PC-9 (cell line): ENCODE measurements at regions of chr4 and their contacts with region 1.

Region 1: DNA sequence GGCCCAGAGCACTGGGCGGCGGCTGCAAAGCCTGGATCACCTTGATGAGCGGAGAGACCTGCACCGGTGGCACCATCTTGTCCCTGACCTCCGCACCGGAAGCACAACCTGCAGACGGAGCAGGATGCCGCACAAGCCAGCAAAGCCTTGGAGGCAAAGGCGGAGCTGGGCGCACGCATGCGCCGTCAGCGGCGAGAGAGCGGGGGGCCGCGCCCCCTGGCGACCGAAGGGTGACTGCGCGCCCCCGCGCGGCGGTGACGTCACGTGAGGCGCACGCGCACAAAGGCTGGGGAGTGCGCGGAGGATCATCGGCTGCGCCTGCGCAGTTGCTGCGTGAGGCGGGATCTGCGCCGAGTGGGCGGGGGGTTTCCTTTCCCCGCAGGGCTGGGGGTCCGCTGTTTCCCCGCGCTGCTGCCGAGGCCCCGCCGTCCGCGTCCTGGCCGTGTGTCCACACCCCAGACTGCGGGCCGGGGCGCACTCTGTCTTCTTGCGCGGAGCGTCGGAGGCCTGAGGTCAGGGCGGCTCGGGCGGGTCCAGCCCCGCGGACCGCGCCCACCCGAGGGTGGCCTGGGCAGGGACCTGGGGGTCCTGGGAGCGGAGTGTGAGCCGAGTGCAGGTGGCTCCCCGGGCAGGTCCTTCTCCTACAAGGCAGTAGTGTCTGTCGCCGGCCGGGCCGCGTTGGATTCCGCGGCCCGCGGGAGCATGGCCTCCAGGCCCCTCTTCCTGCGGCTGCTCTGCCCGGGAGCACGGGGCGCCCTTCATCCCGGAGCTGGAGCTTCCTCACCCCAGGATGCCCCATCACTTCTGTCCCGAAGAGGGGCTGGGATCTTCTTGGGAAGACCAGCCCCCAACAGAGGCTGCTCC is at the starts of genes ATP5ME and MYL5:
- DNase-seq: peak; percentile 87 to 97
- H3K4me3 ChIP-seq: peak within 1 kb of the TSS; percentile 79
- H3K27ac ChIP-seq: peak within 1 kb of the TSS; percentile 25; the same call in 1 of the 2 replicates
- H3K4me1 ChIP-seq: peaks cover 14% of the 10 kb centered on the region
- H3K27me3 ChIP-seq: no peaks in the 10 kb centered on the region
- CTCF ChIP-seq: peak; percentile 88
- total RNA-seq, gene ATP5ME: 334 and 417 TPM in 2 replicates
- total RNA-seq, gene MYL5: 29.8 and 47.6 TPM in 2 replicates

Region 2: DNA sequence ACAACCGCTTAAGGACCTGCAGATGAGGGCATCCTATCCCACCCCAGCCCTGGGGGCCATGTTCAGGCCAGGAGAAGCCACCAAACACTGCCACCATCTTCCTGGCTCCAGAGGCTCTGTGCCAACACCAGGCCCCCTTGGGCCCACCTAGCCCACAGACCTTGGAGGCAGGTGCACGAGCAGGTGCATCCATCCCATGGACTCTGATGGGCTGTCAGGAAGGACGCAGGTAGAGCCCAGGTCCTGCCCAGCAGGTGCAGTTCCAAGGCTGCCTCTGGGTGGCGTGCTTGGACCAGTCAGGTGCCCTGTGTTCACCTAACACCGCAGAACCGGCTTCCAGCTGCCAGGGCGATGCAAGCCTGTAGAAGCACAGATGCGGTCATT is 71.9 kb before region 1 on chr4:
- CTCF ChIA-PET with region 1: interaction called, 12 read pairs
- POLR2A ChIA-PET with region 1: interaction called, 5 read pairs
- intact Hi-C with region 1: loop called (anchors 1 kb)
- DNase-seq: peak; percentile 74 to 87
- H3K4me3 ChIP-seq: no peak overlapping the region
- H3K27ac ChIP-seq: no peak overlapping the region
- H3K4me1 ChIP-seq: no peaks in the 10 kb centered on the region
- H3K27me3 ChIP-seq: peaks cover 89% of the 10 kb centered on the region
- CTCF ChIP-seq: peak; percentile 92

Region 3: DNA sequence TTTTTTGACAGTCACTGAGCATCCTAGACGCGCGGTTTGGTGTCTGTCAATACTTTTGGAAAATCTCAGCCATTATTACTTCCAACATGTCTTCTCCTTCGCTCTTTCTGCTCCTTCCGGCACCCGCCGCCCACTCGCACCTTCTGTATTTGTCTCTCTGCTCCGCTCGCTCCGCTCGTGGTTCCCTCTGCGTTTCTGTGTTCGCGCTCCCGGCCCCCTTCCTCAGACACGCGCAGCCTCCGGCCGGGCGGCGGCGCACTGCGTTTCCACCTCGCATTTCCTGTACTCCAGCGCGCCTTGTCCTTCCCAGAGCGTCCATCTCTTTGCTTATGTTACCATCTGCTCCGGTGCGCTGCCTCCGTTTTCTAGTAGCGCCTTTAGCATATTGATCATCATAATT is 27.9 kb before region 1 on chr4:
- CTCF ChIA-PET with region 1: no interaction called
- POLR2A ChIA-PET with region 1: interaction called, 22 read pairs
- intact Hi-C with region 1: no loop called
- DNase-seq: no peak
- H3K4me3 ChIP-seq: no peak overlapping the region
- H3K27ac ChIP-seq: no peak overlapping the region
- H3K4me1 ChIP-seq: no peaks in the 10 kb centered on the region
- H3K27me3 ChIP-seq: peaks cover 80% of the 10 kb centered on the region
- CTCF ChIP-seq: no peak

Region 4: GRCh38 chr4:687048-687970 is 12.9 kb after region 1 on chr4:
- CTCF ChIA-PET with region 1: no interaction called
- POLR2A ChIA-PET with region 1: interaction called, 5 read pairs
- intact Hi-C with region 1: loop called (anchors 1 kb)
- DNase-seq: peak; percentile 86 to 89
- H3K4me3 ChIP-seq: peak overlapping the region; percentile 28; the same call in 1 of the 2 replicates
- H3K27ac ChIP-seq: peak overlapping the region; percentile 5; the same call in 1 of the 2 replicates
- H3K4me1 ChIP-seq: peaks cover 19% of the 10 kb centered on the region
- H3K27me3 ChIP-seq: no peaks in the 10 kb centered on the region
- CTCF ChIP-seq: no peak